ENCODE measurements at regions of chr16 and their contacts with region 1.

Region 1: GRCh38 chr16:11105038-11105903 is 150.7 kb downstream of the SOCS1 start:
- DNase-seq: peak; percentile 69
- H3K4me3 Mint-ChIP-seq: peak overlapping the region; percentile 56
- H3K27ac Mint-ChIP-seq: peak overlapping the region; percentile 97
- H3K4me1 Mint-ChIP-seq: peaks cover 72% of the 10 kb centered on the region
- H3K27me3 Mint-ChIP-seq: no peaks in the 10 kb centered on the region

Region 2: GRCh38 chr16:10625593-10626273 is 479.5 kb before region 1 on chr16:
- CTCF ChIA-PET with region 1: no interaction called
- POLR2A ChIA-PET with region 1: no interaction called
- intact Hi-C with region 1: no loop called
- DNase-seq: no peak
- H3K4me3 Mint-ChIP-seq: no peak overlapping the region
- H3K27ac Mint-ChIP-seq: no peak overlapping the region
- H3K4me1 Mint-ChIP-seq: no peaks in the 10 kb centered on the region
- H3K27me3 Mint-ChIP-seq: no peaks in the 10 kb centered on the region

Region 3: DNA sequence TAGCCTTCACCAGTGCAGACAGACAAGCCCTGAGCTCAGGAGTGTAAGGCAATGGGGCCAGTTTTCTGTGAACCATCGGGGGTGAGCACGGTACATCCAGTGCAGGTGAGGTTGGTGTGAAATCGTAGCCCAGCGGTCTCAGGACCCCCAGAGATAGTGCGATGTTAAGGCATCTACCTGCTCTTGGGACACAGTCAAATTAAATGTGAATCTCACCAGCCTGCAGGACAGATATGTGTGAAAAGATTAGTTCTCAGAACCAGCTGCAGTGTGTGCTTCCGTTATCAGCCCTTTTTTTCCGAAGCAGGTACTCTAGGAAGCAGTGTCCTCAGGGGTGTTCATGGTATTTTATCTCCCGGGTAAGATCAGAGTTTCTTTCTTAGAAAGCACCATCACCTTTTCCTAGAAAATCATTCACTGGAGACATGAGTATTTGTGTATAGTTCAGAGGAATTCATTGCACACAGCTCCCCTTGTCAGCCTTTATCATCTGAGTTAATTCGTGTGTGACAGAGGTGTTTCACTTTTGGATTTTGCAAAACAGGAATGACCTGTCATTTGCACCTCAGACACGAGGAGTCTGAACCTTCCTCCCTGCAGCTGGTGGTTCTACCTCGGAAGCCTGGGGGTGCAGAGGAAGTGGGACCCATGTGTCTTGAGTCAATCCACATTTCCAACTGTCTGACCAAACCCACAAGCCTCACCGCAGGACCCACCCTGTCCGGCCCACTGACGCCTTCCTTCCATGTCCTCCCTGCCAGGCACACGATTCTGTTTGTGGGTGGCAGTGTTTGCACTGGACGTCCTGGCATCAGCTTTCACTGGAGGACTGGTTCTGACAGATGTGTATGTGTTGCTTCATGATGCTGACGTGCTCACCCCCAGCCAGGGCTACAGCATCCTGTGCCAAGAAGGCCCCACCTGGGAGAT is 53.1 kb before region 1 on chr16:
- CTCF ChIA-PET with region 1: interaction called, 14 read pairs
- POLR2A ChIA-PET with region 1: interaction called, 18 read pairs
- intact Hi-C with region 1: no loop called
- DNase-seq: peak; percentile 94
- H3K4me3 Mint-ChIP-seq: peak overlapping the region; percentile 24
- H3K27ac Mint-ChIP-seq: peak overlapping the region; percentile 94
- H3K4me1 Mint-ChIP-seq: peaks cover 64% of the 10 kb centered on the region
- H3K27me3 Mint-ChIP-seq: no peaks in the 10 kb centered on the region

Region 4: GRCh38 chr16:11164482-11165270 is 59.4 kb after region 1 on chr16:
- CTCF ChIA-PET with region 1: interaction called, 4 read pairs
- POLR2A ChIA-PET with region 1: interaction called, 8 read pairs
- intact Hi-C with region 1: loop called (anchors 2 kb)
- DNase-seq: no peak
- H3K4me3 Mint-ChIP-seq: no peak overlapping the region
- H3K27ac Mint-ChIP-seq: peak overlapping the region; percentile 24
- H3K4me1 Mint-ChIP-seq: peaks cover 26% of the 10 kb centered on the region
- H3K27me3 Mint-ChIP-seq: no peaks in the 10 kb centered on the region

Region 5: GRCh38 chr16:11175787-11176341 is 70.6 kb after region 1 on chr16:
- CTCF ChIA-PET with region 1: no interaction called
- POLR2A ChIA-PET with region 1: no interaction called
- intact Hi-C with region 1: loop called (anchors 5 kb)
- DNase-seq: peak; percentile 79
- H3K4me3 Mint-ChIP-seq: no peak overlapping the region
- H3K27ac Mint-ChIP-seq: peak overlapping the region; percentile 87
- H3K4me1 Mint-ChIP-seq: peaks cover 50% of the 10 kb centered on the region
- H3K27me3 Mint-ChIP-seq: no peaks in the 10 kb centered on the region

Region 6: GRCh38 chr16:11232852-11233726 is 127.8 kb after region 1 on chr16:
- CTCF ChIA-PET with region 1: interaction called, 7 read pairs
- POLR2A ChIA-PET with region 1: interaction called, 9 read pairs
- intact Hi-C with region 1: loop called (anchors 1 kb)
- DNase-seq: peak; percentile 97
- H3K4me3 Mint-ChIP-seq: peak overlapping the region; percentile 62
- H3K27ac Mint-ChIP-seq: peak overlapping the region; percentile 99
- H3K4me1 Mint-ChIP-seq: peaks cover 74% of the 10 kb centered on the region
- H3K27me3 Mint-ChIP-seq: no peaks in the 10 kb centered on the region

Region 7: GRCh38 chr16:11248133-11248532 is 142.9 kb after region 1 on chr16:
- CTCF ChIA-PET with region 1: interaction called, 4 read pairs
- POLR2A ChIA-PET with region 1: interaction called, 14 read pairs
- intact Hi-C with region 1: loop called (anchors 1 kb)
- DNase-seq: peak; percentile 65
- H3K4me3 Mint-ChIP-seq: no peak overlapping the region
- H3K27ac Mint-ChIP-seq: peak overlapping the region; percentile 93
- H3K4me1 Mint-ChIP-seq: peaks cover 64% of the 10 kb centered on the region
- H3K27me3 Mint-ChIP-seq: peaks cover 2% of the 10 kb centered on the region